Activated T-helper 1 cell treated with anti-CD3 and anti-CD28 coated beads, Interleukin-12 subunit alpha, Interleukin-12 subunit beta, Interleukin-2, Interleukin-4 antibody, amounts not matched to agents 30 ng/mL and 10 ng/mL and 1 ng/mL, durations not matched to agents 14 hours and 24 hours and 36 hours (primary cell): ENCODE measurements at regions of chr17 and their contacts with region 1.

Region 1: DNA sequence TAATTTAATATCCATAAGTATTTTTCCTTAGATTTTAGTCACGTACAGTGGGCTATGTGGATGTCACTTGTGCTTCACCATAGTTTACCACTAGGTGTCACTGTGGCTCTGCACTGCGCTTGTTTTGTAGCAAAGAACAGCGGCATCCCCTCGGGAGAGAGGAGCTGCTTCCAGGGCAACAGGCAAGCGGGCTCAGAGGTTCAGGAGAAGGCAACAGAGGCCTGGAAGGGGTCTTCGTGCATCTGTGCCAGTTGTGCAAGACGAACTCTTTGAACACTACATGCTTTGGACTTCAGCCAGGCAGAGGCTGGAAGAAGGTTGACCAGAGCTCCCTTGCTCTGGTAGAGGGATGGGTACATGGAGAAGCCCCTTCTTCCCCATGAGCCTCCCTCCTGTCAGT is 20.6 kb downstream of the CYB561 start:
- DNase-seq: peak; percentile 58
- H3K4me3 Mint-ChIP-seq: no peak overlapping the region
- H3K27ac Mint-ChIP-seq: no peak overlapping the region
- H3K4me1 Mint-ChIP-seq: peaks cover 34% of the 10 kb centered on the region
- H3K27me3 Mint-ChIP-seq: peaks cover 6% of the 10 kb centered on the region

Region 2: DNA sequence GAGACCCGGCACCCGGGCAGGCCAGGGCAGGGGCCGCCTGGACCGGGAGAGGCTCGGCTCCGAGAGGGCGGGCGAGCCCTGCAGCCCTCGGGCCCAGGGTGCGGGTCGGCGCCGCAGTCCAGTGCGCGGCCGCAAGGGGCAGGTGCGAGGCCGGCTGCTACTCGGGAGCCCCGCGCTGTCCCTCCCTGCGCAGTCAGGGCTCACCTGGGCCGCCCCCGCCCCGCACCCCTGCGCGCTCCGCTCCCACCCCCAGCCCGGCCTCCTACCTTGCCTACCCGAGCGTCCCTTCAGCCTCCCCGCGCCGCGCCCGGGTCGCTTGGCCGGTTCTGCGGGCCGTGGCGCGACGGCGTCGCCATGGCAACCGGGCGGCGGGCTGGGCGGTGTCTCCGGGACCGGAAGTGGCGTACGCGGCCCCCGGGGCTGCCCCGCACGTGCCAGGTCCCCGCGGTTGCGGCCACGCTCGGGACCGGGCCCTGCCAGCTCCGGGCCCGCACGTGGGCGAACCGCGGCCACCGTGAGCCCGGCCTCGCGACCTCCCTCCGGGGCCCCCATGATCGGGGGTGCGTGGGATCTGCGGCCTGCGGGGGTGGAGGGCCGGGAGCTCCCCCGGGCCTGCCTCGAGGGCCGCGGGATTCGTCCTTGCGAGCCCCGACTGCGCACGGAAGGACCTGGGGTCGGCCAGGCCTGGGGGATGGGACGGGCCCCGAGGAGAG is 20.7 kb after region 1 on chr17 and contains the start of gene CYB561:
- intact Hi-C with region 1: loop called (anchors 2 kb)
- DNase-seq: peak; percentile 64
- H3K4me3 Mint-ChIP-seq: peak within 1 kb of the TSS; percentile 76
- H3K27ac Mint-ChIP-seq: peak within 1 kb of the TSS; percentile 64
- H3K4me1 Mint-ChIP-seq: peaks cover 19% of the 10 kb centered on the region
- H3K27me3 Mint-ChIP-seq: peaks cover 11% of the 10 kb centered on the region
- total RNA-seq, gene CYB561: 1.9 and 2.9 TPM in 2 replicates

Region 3: DNA sequence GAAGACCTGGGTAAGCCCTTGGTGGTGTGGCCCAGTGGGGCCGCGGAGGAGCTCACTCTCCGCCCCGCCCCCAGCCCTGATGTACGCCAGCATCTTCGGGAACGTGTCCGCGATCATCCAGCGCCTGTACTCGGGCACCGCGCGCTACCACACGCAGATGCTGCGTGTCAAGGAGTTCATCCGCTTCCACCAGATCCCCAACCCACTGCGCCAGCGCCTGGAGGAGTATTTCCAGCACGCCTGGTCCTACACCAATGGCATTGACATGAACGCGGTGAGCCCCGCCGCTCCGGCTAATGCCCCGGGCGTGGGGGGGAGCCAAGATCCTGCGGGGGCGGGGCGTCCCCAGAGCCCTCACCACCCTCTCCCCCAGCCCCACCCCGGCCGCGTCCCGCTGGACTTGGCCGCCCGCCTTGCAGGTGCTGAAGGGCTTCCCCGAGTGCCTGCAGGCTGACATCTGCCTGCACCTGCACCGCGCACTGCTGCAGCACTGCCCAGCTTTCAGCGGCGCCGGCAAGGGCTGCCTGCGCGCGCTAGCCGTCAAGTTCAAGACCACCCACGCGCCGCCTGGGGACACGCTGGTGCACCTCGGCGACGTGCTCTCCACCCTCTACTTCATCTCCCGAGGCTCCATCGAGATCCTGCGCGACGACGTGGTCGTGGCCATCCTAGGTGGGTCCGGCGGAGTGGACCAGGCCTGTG is 112.7 kb after region 1 on chr17:
- intact Hi-C with region 1: no loop called
- DNase-seq: no peak
- H3K4me3 Mint-ChIP-seq: no peak overlapping the region
- H3K27ac Mint-ChIP-seq: no peak overlapping the region
- H3K4me1 Mint-ChIP-seq: no peaks in the 10 kb centered on the region
- H3K27me3 Mint-ChIP-seq: peaks cover 25% of the 10 kb centered on the region

Region 4: GRCh38 chr17:63611354-63611753 is 185.9 kb after region 1 on chr17:
- intact Hi-C with region 1: loop called (anchors 1 kb)
- DNase-seq: peak; percentile 11
- H3K4me3 Mint-ChIP-seq: peak overlapping the region; percentile 77
- H3K27ac Mint-ChIP-seq: peak overlapping the region; percentile 98
- H3K4me1 Mint-ChIP-seq: peaks cover 30% of the 10 kb centered on the region
- H3K27me3 Mint-ChIP-seq: no peaks in the 10 kb centered on the region

Region 5: GRCh38 chr17:63714547-63715277 is 289.2 kb after region 1 on chr17:
- intact Hi-C with region 1: loop called (anchors 1 kb)
- DNase-seq: no peak
- H3K4me3 Mint-ChIP-seq: no peak overlapping the region
- H3K27ac Mint-ChIP-seq: no peak overlapping the region
- H3K4me1 Mint-ChIP-seq: peaks cover 6% of the 10 kb centered on the region
- H3K27me3 Mint-ChIP-seq: no peaks in the 10 kb centered on the region

Region 6: GRCh38 chr17:63827002-63827771 is 401.7 kb after region 1 on chr17 and contains the starts of genes FTSJ3 and PSMC5:
- intact Hi-C with region 1: loop called (anchors 10 kb)
- DNase-seq: peak; percentile 94
- H3K4me3 Mint-ChIP-seq: peak within 1 kb of the TSS; percentile 96
- H3K27ac Mint-ChIP-seq: peak within 1 kb of the TSS; percentile 98
- H3K4me1 Mint-ChIP-seq: peaks cover 71% of the 10 kb centered on the region
- H3K27me3 Mint-ChIP-seq: no peaks in the 10 kb centered on the region
- total RNA-seq, gene FTSJ3: 95.6 and 100 TPM in 2 replicates
- total RNA-seq, gene PSMC5: 185 and 195 TPM in 2 replicates